Right cardiac atrium (tissue), 5 donors: ENCODE measurements at regions of chr6 and their contacts with region 1.

Region 1: DNA sequence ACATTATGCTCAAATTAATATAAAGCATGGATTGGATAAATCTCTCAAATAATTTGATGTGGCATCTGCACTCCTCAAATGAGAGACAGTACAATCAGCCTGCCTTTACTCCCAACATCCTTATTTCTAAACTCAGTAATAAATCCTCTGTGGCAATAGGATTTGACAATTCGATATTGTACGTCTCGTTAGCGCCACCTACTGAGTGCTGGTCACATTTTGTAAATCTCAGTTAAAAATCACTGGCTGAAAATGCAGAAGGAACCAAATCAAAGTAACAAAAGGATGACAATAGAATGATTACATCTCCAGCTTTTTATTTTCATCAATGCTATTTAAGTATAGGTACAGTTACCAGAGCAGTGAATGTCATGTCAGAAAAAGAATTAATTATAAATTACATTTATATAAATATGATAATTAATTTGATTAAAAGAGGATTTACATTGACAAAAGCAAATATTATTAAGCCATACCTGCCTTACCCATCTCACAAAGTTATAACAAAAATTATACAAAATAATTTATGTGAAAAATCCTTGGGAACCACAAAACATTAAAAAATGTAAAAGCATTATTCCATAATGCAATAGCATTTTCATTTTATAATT is 20.2 kb upstream of the GJE1 start:
- DNase-seq: peak; percentile 63 to 85 (median 66)
- ATAC-seq: no peak
- H3K4me3 ChIP-seq: no peak overlapping the region
- H3K27ac ChIP-seq: no peak overlapping the region
- H3K4me1 ChIP-seq: no peaks in the 10 kb centered on the region
- H3K27me3 ChIP-seq: no peaks in the 10 kb centered on the region

Region 2: DNA sequence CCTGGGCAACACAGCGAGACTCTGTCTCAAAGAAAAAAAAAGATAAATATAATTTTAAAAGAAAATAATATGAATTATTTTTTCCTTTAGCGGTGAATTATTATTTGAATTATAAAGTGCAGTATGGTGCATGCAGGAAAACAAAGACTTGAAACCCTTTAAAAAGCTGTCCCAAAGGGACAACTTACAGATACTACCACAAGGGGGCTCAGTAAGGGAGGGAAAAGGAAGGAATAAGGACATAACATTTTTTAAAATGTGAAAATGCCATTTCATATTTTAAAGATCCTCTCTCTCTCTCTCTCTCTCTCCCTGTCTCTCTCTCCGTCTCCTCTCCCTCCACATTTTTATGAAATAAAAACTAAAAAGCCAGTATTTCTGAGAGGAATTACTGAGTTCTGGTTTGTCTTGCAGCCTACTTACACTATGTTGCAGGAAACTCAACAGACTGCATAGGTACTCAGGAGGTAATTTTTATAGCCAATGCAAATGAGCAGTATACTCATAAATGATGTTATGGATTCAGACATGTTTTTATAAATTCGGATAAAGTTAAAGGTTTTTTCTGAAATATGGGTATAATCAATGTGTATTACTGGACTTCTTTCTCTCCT is 434.9 kb before region 1 on chr6:
- intact Hi-C with region 1: loop called in 2 of 4 experiments (anchors 10 kb)
- DNase-seq: no peak
- ATAC-seq: no peak
- H3K4me3 ChIP-seq: no peak overlapping the region
- H3K27ac ChIP-seq: no peak overlapping the region
- H3K4me1 ChIP-seq: no peaks in the 10 kb centered on the region
- H3K27me3 ChIP-seq: no peaks in the 10 kb centered on the region

Region 3: GRCh38 chr6:141688916-141689315 is 423.6 kb before region 1 on chr6:
- intact Hi-C with region 1: loop called in 1 of 4 experiments (anchors 10 kb)
- DNase-seq: no peak
- ATAC-seq: no peak
- H3K4me3 ChIP-seq: no peak overlapping the region
- H3K27ac ChIP-seq: no peak overlapping the region
- H3K4me1 ChIP-seq: no peaks in the 10 kb centered on the region
- H3K27me3 ChIP-seq: no peaks in the 10 kb centered on the region

Region 4: DNA sequence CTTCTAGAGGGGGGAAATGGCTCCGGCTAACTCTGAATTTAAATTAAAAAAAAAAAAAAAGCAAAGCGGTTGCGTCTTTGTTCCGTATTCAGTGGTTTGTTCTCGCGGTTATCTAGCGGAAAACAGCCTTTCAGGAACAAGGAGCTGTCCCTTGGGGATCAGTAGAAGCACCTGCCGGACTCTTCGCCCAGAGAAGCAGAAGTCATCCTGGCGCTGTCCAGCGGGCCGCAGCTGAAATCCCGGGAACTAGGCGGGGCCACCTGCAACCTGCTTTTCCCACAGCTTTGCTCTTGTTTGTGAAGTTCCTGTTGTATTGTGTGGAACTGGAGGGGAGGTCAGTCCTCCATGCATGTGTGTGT is 23.7 kb before region 1 on chr6:
- intact Hi-C with region 1: no loop called
- DNase-seq: peak in 1 of 3 donors; percentile 32
- ATAC-seq: no peak
- H3K4me3 ChIP-seq: no peak overlapping the region
- H3K27ac ChIP-seq: no peak overlapping the region
- H3K4me1 ChIP-seq: no peaks in the 10 kb centered on the region
- H3K27me3 ChIP-seq: no peaks in the 10 kb centered on the region